ENCODE measurements at regions of chr2 and their contacts with region 1.

Region 1: GRCh38 chr2:65064728-65065552 is 8.7 kb downstream of the CEP68 start:
- DNase-seq: peak; percentile 62
- H3K4me3 Mint-ChIP-seq: no peak overlapping the region
- H3K27ac Mint-ChIP-seq: peak overlapping the region; percentile 80
- H3K4me1 Mint-ChIP-seq: peaks cover 43% of the 10 kb centered on the region
- H3K27me3 Mint-ChIP-seq: no peaks in the 10 kb centered on the region

Region 2: DNA sequence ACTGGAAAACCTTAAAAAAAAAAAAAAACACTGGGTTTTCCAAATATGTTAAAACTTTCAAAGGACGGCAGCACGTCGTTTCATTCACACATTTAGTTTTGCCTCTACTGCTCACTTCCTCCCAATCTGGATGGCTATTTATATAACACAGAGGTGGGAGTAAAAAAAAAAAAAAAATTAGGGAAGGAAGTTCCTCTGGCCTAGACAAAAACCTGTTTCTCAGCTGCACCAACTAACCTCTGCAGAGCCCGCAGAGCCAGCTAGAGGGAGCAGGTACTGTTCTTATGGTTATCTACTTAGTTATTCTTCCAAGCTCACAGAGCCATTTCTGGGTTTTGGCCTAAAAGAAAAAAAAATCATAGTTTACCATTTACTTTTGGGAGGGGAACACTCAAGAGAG is 47.6 kb before region 1 on chr2:
- CTCF ChIA-PET with region 1: no interaction called
- POLR2A ChIA-PET with region 1: no interaction called
- intact Hi-C with region 1: no loop called
- DNase-seq: no peak
- H3K4me3 Mint-ChIP-seq: no peak overlapping the region
- H3K27ac Mint-ChIP-seq: no peak overlapping the region
- H3K4me1 Mint-ChIP-seq: no peaks in the 10 kb centered on the region
- H3K27me3 Mint-ChIP-seq: no peaks in the 10 kb centered on the region

Region 3: DNA sequence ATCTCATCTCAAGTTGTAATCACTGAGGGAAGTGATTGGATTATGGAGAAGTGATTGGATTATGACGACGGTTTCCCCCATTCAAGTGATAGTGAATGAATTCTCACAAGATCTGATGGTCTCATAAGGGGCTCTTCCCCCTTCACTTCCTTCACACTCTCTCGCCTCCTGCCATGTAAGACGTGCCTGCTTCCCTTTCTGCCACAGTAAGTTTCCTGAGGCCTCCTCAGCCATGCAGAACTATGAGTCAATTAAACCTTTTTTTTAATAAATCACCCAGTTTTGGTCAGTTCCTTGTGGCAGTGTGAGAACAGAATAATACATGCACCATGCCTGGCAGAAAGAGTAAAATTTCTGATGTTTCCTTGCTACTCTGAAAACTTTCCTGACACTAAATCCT is 27.9 kb after region 1 on chr2:
- CTCF ChIA-PET with region 1: no interaction called
- POLR2A ChIA-PET with region 1: no interaction called
- intact Hi-C with region 1: no loop called
- DNase-seq: no peak
- H3K4me3 Mint-ChIP-seq: no peak overlapping the region
- H3K27ac Mint-ChIP-seq: peak overlapping the region; percentile 23
- H3K4me1 Mint-ChIP-seq: peaks cover 11% of the 10 kb centered on the region
- H3K27me3 Mint-ChIP-seq: no peaks in the 10 kb centered on the region

Region 4: GRCh38 chr2:65164426-65164891 is 99.5 kb after region 1 on chr2:
- CTCF ChIA-PET with region 1: interaction called, 59 read pairs
- POLR2A ChIA-PET with region 1: no interaction called
- intact Hi-C with region 1: loop called (anchors 1 kb)
- DNase-seq: no peak
- H3K4me3 Mint-ChIP-seq: no peak overlapping the region
- H3K27ac Mint-ChIP-seq: no peak overlapping the region
- H3K4me1 Mint-ChIP-seq: peaks cover 6% of the 10 kb centered on the region
- H3K27me3 Mint-ChIP-seq: no peaks in the 10 kb centered on the region

Region 5: GRCh38 chr2:65186872-65187851 is 122.2 kb after region 1 on chr2:
- CTCF ChIA-PET with region 1: interaction called, 44 read pairs
- POLR2A ChIA-PET with region 1: no interaction called
- intact Hi-C with region 1: loop called (anchors 1 kb)
- DNase-seq: peak; percentile 76
- H3K4me3 Mint-ChIP-seq: no peak overlapping the region
- H3K27ac Mint-ChIP-seq: no peak overlapping the region
- H3K4me1 Mint-ChIP-seq: peaks cover 10% of the 10 kb centered on the region
- H3K27me3 Mint-ChIP-seq: peaks cover 16% of the 10 kb centered on the region

Region 6: GRCh38 chr2:65554765-65555591 is 490.0 kb after region 1 on chr2:
- CTCF ChIA-PET with region 1: no interaction called
- POLR2A ChIA-PET with region 1: no interaction called
- intact Hi-C with region 1: loop called (anchors 5 kb)
- DNase-seq: peak; percentile 58
- H3K4me3 Mint-ChIP-seq: no peak overlapping the region
- H3K27ac Mint-ChIP-seq: no peak overlapping the region
- H3K4me1 Mint-ChIP-seq: peaks cover 11% of the 10 kb centered on the region
- H3K27me3 Mint-ChIP-seq: peaks cover 6% of the 10 kb centered on the region